ENCODE measurements at regions of chr1 and their contacts with region 1.

Region 1: GRCh38 chr1:96362623-96363022 is 359.0 kb upstream of the PTBP2 start:
- DNase-seq: no peak
- H3K4me3 Mint-ChIP-seq: peak overlapping the region; percentile 0
- H3K27ac Mint-ChIP-seq: peak overlapping the region; percentile 64
- H3K4me1 Mint-ChIP-seq: peaks cover 9% of the 10 kb centered on the region
- H3K27me3 Mint-ChIP-seq: no peaks in the 10 kb centered on the region

Region 2: GRCh38 chr1:95832370-95832769 is 530.3 kb before region 1 on chr1:
- intact Hi-C with region 1: no loop called
- DNase-seq: no peak
- H3K4me3 Mint-ChIP-seq: no peak overlapping the region
- H3K27ac Mint-ChIP-seq: no peak overlapping the region
- H3K4me1 Mint-ChIP-seq: no peaks in the 10 kb centered on the region
- H3K27me3 Mint-ChIP-seq: no peaks in the 10 kb centered on the region

Region 3: DNA sequence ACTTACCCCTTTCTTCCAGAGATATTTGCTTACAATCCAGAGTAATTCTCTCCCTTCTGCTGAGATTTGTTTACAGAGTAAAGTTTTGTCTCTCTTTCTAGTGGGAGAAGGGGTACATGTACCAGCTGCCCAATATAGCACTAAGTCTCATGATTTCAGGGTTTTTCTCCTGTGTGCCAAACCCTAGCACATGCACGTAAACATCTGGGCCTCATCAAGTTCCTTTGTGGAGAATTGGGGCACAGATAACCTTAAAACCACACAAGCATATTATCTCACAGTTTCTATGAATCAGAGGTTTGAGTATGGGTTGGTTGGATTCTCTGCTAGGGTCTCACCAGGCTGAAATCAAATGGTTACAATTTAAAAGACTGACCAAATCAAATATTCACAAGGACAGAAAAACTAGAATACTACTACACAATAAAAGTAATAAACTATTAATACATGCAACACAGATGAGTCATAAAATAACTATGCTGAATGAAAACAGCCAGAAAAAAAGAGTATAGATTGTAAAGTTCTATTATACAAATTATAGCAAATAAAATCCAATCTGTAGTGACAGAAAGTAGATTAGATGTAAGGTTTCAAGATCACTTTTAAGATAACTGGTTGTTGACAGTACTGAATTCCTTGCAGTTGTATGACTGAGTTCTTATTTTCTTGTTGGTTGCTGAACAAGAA is 11.6 kb after region 1 on chr1:
- intact Hi-C with region 1: no loop called
- DNase-seq: no peak
- H3K4me3 Mint-ChIP-seq: no peak overlapping the region
- H3K27ac Mint-ChIP-seq: no peak overlapping the region
- H3K4me1 Mint-ChIP-seq: no peaks in the 10 kb centered on the region
- H3K27me3 Mint-ChIP-seq: no peaks in the 10 kb centered on the region

Region 4: GRCh38 chr1:96409689-96410088 is 47.1 kb after region 1 on chr1:
- intact Hi-C with region 1: no loop called
- DNase-seq: no peak
- H3K4me3 Mint-ChIP-seq: no peak overlapping the region
- H3K27ac Mint-ChIP-seq: no peak overlapping the region
- H3K4me1 Mint-ChIP-seq: no peaks in the 10 kb centered on the region
- H3K27me3 Mint-ChIP-seq: no peaks in the 10 kb centered on the region

Region 5: GRCh38 chr1:96721416-96722160 is 359.0 kb after region 1 on chr1 and contains the start of gene PTBP2:
- intact Hi-C with region 1: loop called (anchors 5 kb)
- DNase-seq: peak; percentile 95
- H3K4me3 Mint-ChIP-seq: peak within 1 kb of the TSS; percentile 97
- H3K27ac Mint-ChIP-seq: peak within 1 kb of the TSS; percentile 93
- H3K4me1 Mint-ChIP-seq: peaks cover 20% of the 10 kb centered on the region
- H3K27me3 Mint-ChIP-seq: peaks cover 7% of the 10 kb centered on the region
- total RNA-seq, gene PTBP2: 15.6 and 16.2 TPM in 2 replicates

Region 6: GRCh38 chr1:96782856-96783255 is 420.2 kb after region 1 on chr1:
- intact Hi-C with region 1: no loop called
- DNase-seq: no peak
- H3K4me3 Mint-ChIP-seq: no peak overlapping the region
- H3K27ac Mint-ChIP-seq: no peak overlapping the region
- H3K4me1 Mint-ChIP-seq: no peaks in the 10 kb centered on the region
- H3K27me3 Mint-ChIP-seq: no peaks in the 10 kb centered on the region

Measured in activated CD4-positive, alpha-beta T cell treated with anti-CD3 and anti-CD28 coated beads, Interleukin-2, amount 10 ng/mL, durations not matched to agents 24 days and 14 days (primary cell).